Ascending aorta (tissue), 2 donors: ENCODE measurements at regions of chrX and their contacts with region 1.

Region 1: GRCh38 chrX:48574270-48575266 is at the start of gene RBM3:
- DNase-seq: peak; percentile 77 to 95
- H3K4me3 ChIP-seq: peak within 1 kb of the TSS; percentile 71 to 78
- H3K27ac ChIP-seq: peak within 1 kb of the TSS; percentile 96 to 99
- H3K4me1 ChIP-seq: peaks cover 0 to 7% of the 10 kb centered on the region in 2 donors
- H3K27me3 ChIP-seq: no peaks in the 10 kb centered on the region
- CTCF ChIP-seq: peak in 2 of 3 experiments; percentile 30 to 36
- total RNA-seq, gene RBM3: 119 TPM

Region 2: DNA sequence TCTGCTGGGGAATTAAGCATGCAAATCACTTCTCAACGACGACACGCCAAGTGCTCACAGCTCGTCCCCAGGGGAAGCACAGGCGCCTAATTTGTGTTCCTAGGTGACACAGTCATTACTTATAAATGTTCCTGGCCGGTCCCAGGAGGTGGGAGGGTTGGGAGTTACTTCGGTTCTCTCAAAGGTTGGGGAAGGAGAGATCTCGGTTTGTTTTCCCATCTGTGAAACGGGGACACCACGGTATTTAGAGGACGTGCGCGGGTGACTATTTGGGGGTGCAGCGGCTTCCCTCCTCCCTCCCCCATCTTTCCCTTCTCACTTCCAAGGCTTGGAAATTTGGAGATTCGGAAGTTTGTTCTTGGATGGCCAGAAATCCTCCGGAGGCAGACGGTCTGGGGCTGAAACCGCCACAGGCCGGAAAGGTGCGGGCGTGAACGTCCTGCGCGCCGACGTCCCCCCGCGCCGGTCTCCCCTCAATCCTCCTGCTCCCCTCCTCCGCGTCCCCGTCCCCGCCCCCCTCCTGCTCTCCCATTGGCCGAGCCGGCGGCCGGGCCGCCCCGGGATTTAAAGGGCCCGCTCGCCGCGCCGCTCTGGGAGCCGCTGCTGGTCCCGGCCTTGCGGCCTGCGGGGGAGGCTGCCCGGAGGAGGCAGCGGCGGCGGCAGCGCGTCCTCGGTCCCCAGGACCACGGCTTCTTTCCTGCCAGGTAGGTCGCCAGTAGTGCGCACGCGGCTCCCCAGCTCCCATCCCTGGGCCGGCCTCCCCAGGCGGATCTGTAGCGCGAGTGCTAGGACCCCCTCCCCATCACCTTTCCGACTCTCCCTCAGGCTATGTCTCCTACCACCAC is 65.9 kb before region 1 on chrX and contains the start of gene PORCN:
- intact Hi-C with region 1: loop called (anchors 2 kb)
- DNase-seq: peak; percentile 28 to 86
- H3K4me3 ChIP-seq: peak within 1 kb of the TSS; percentile 63 to 69
- H3K27ac ChIP-seq: peak within 1 kb of the TSS; percentile 51 to 72
- H3K4me1 ChIP-seq: peaks cover 0 to 3% of the 10 kb centered on the region in 2 donors
- H3K27me3 ChIP-seq: no peaks in the 10 kb centered on the region
- CTCF ChIP-seq: no peak
- total RNA-seq, gene PORCN: 6.2 TPM

Region 3: GRCh38 chrX:48597353-48598264 is 23.0 kb after region 1 on chrX and contains the start of gene WDR13:
- intact Hi-C with region 1: loop called (anchors 1 kb)
- DNase-seq: peak; percentile 71 to 95
- H3K4me3 ChIP-seq: peak within 1 kb of the TSS; percentile 59 to 68
- H3K27ac ChIP-seq: peak within 1 kb of the TSS; percentile 94
- H3K4me1 ChIP-seq: no peaks in the 10 kb centered on the region
- H3K27me3 ChIP-seq: no peaks in the 10 kb centered on the region
- CTCF ChIP-seq: no peak
- total RNA-seq, gene WDR13: 87.1 TPM

Region 4: GRCh38 chrX:48794911-48795501 is 220.4 kb after region 1 on chrX:
- intact Hi-C with region 1: no loop called
- DNase-seq: no peak
- H3K4me3 ChIP-seq: no peak overlapping the region
- H3K27ac ChIP-seq: no peak overlapping the region
- H3K4me1 ChIP-seq: no peaks in the 10 kb centered on the region
- H3K27me3 ChIP-seq: no peaks in the 10 kb centered on the region
- CTCF ChIP-seq: no peak